ENCODE measurements at regions of chr4 and their contacts with region 1.

Region 1: GRCh38 chr4:77367638-77368037 is 210.6 kb downstream of the CCNG2 start:
- DNase-seq: no peak
- H3K4me3 Mint-ChIP-seq: no peak overlapping the region
- H3K27ac Mint-ChIP-seq: no peak overlapping the region
- H3K4me1 Mint-ChIP-seq: no peaks in the 10 kb centered on the region
- H3K27me3 Mint-ChIP-seq: no peaks in the 10 kb centered on the region
- CTCF ChIP-seq: no peak

Region 2: GRCh38 chr4:77418333-77419038 is 50.8 kb after region 1 on chr4:
- CTCF ChIA-PET with region 1: interaction called, 11 read pairs
- POLR2A ChIA-PET with region 1: interaction called, 3 read pairs
- intact Hi-C with region 1: no loop called
- DNase-seq: peak; percentile 34
- H3K4me3 Mint-ChIP-seq: no peak overlapping the region
- H3K27ac Mint-ChIP-seq: no peak overlapping the region
- H3K4me1 Mint-ChIP-seq: no peaks in the 10 kb centered on the region
- H3K27me3 Mint-ChIP-seq: peaks cover 28% of the 10 kb centered on the region
- CTCF ChIP-seq: peak; percentile 19

Region 3: GRCh38 chr4:77433418-77433733 is 65.7 kb after region 1 on chr4:
- CTCF ChIA-PET with region 1: interaction called, 9 read pairs
- POLR2A ChIA-PET with region 1: no interaction called
- intact Hi-C with region 1: loop called (anchors 5 kb)
- DNase-seq: peak; percentile 72
- H3K4me3 Mint-ChIP-seq: no peak overlapping the region
- H3K27ac Mint-ChIP-seq: no peak overlapping the region
- H3K4me1 Mint-ChIP-seq: no peaks in the 10 kb centered on the region
- H3K27me3 Mint-ChIP-seq: no peaks in the 10 kb centered on the region
- CTCF ChIP-seq: peak; percentile 64

Region 4: GRCh38 chr4:77697860-77698590 is 330.4 kb after region 1 on chr4:
- CTCF ChIA-PET with region 1: interaction called, 19 read pairs
- POLR2A ChIA-PET with region 1: no interaction called
- intact Hi-C with region 1: loop called (anchors 5 kb)
- DNase-seq: peak; percentile 73
- H3K4me3 Mint-ChIP-seq: no peak overlapping the region
- H3K27ac Mint-ChIP-seq: no peak overlapping the region
- H3K4me1 Mint-ChIP-seq: peaks cover 23% of the 10 kb centered on the region
- H3K27me3 Mint-ChIP-seq: no peaks in the 10 kb centered on the region
- CTCF ChIP-seq: peak; percentile 65